ENCODE measurements at regions of chr1 and their contacts with region 1.

Region 1: DNA sequence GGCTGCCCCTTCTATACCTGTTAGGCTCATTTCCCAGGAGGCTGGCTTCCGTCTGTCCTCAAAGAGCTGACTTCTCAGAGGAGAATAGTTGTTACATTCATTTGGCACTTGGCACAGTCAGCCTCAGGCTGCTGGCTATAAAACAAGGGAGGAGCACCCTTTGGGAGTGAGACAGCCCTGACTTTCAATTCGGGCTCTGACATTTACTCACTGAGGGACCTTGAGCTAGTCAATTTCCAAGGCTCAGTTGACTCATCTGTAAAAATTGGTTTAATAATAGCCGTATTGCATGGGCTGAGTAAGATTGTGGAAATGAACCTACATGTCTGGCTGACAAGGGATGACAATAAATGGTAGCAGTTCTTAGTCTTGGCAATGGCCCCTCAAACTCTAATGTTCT is 13.7 kb downstream of the ALX3 start:
- DNase-seq: peak; percentile 37
- H3K4me3 ChIP-seq: no peak overlapping the region
- H3K27ac ChIP-seq: peak overlapping the region; percentile 12
- H3K4me1 ChIP-seq: no peaks in the 10 kb centered on the region
- H3K27me3 ChIP-seq: no peaks in the 10 kb centered on the region
- CTCF ChIP-seq: no peak

Region 2: GRCh38 chr1:109739738-109740660 is 316.8 kb before region 1 on chr1:
- intact Hi-C with region 1: no loop called
- DNase-seq: peak; percentile 83
- H3K4me3 ChIP-seq: peak overlapping the region; percentile 73
- H3K27ac ChIP-seq: peak overlapping the region; percentile 50
- H3K4me1 ChIP-seq: peaks cover 7% of the 10 kb centered on the region
- H3K27me3 ChIP-seq: no peaks in the 10 kb centered on the region
- CTCF ChIP-seq: no peak

Region 3: GRCh38 chr1:109944541-109944940 is 112.2 kb before region 1 on chr1:
- intact Hi-C with region 1: no loop called
- DNase-seq: no peak
- H3K4me3 ChIP-seq: no peak overlapping the region
- H3K27ac ChIP-seq: no peak overlapping the region
- H3K4me1 ChIP-seq: no peaks in the 10 kb centered on the region
- H3K27me3 ChIP-seq: no peaks in the 10 kb centered on the region
- CTCF ChIP-seq: no peak

Region 4: GRCh38 chr1:110106013-110106941 is 49.5 kb after region 1 on chr1:
- intact Hi-C with region 1: loop called (anchors 2 kb)
- DNase-seq: peak; percentile 62
- H3K4me3 ChIP-seq: no peak overlapping the region
- H3K27ac ChIP-seq: no peak overlapping the region
- H3K4me1 ChIP-seq: no peaks in the 10 kb centered on the region
- H3K27me3 ChIP-seq: no peaks in the 10 kb centered on the region
- CTCF ChIP-seq: peak; percentile 94